CD4-positive, alpha-beta memory T cell (primary cell): ENCODE measurements at regions of chr17 and their contacts with region 1.

Region 1: DNA sequence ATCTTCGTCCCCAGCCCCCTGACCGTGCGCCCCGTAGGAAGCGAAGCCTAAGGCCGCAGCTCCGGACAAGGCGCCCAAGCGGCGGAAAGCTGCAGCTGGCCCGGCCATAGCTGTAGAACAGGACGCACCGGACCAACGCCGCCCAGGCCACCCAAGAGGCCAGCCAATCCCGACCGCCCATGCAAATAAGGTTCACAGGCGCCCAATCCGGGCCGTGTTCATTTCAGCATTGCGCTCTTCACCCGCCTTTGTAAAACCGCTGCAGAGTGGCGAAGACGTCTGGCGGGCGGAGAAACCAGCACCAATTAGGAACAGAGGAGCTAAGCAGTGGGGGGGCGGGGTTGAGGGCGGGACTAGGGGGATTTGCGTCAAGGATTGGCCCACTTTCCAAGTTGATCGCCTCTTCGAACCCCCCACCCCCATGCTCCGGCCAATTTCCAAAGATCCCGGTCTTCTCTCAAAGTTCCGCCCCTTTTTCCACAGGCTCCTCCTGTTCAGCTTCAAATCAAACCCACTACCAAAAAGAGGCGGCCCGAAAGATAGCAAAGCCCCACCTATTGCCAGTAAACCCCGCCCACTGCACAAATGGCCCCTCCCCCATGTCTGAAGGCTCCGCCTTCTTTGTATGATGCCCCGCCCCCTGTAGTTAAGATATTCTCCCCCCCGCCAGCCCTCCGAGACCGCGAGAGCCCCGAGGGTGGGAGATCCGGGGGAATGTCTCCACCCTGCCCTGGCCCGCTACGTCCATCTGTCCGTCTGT is at the start of gene TMEM256:
- DNase-seq: peak; percentile 91 to 98 (median 94)
- H3K4me3 ChIP-seq: peak within 1 kb of the TSS; percentile 73 to 77
- H3K4me3 Mint-ChIP-seq: peak within 1 kb of the TSS; percentile 93 to 98 (median 97)
- H3K27ac ChIP-seq: peak within 1 kb of the TSS; percentile 51
- H3K27ac Mint-ChIP-seq: peak within 1 kb of the TSS; percentile 89 to 99 (median 98)
- H3K4me1 ChIP-seq: peaks cover 17% of the 10 kb centered on the region
- H3K4me1 Mint-ChIP-seq: peaks cover 16 to 40% (median 18%) of the 10 kb centered on the region in 4 donors
- H3K27me3 ChIP-seq: no peaks in the 10 kb centered on the region
- H3K27me3 Mint-ChIP-seq: peaks cover 2% of the 10 kb centered on the region in 2 donors
- total RNA-seq, gene TMEM256: 35.4 to 38.3 TPM

Region 2: DNA sequence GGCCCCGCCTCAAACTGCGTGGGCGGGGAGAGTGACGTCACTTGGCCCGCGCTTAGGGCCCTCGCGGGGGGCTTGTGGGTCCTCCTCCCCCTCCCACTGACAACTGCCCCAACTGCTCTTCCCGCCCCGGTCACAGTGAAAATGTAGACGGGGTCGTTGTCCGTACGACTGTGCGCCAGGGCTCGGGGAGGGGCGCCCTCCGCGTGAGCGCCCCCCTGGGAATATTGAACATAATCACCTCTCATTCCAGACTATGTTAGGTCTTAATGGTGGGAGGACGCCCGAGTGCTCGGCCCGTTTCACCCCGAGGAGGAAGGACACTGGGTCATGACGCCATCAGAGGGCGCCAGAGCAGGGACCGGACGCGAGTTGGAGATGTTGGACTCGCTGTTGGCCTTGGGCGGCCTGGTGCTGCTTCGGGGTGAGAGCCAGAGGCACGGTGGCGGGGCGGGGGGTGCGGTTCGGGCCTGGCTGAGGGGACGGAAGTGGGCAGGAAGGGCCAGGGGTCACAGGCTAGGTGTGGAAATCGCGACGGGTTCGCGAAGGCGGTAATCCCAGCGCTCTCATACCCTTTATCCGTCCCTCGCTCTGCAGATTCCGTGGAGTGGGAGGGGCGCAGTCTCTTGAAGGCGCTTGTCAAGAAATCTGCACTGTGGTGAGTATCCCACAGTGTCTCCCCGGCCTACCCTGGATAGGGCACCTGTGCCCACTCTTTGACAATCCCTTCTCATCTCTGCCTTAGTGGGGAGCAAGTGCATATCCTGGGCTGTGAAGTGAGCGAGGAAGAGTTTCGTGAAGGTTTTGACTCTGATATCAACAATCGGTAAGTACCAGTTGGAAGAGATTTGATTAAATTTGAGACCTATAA is 151.7 kb before region 1 on chr17 and contains the start of gene ELP5:
- CTCF ChIA-PET with region 1: no interaction called
- POLR2A ChIA-PET with region 1: no interaction called
- intact Hi-C with region 1: loop called (anchors 1 kb)
- DNase-seq: peak in 4 of 5 donors; percentile 86 to 92 (median 88)
- H3K4me3 ChIP-seq: peak within 1 kb of the TSS; percentile 71 to 92
- H3K4me3 Mint-ChIP-seq: peak within 1 kb of the TSS; percentile 91 to 97 (median 95)
- H3K27ac ChIP-seq: peak within 1 kb of the TSS; percentile 98
- H3K27ac Mint-ChIP-seq: peak within 1 kb of the TSS; percentile 98 to 100 (median 99)
- H3K4me1 ChIP-seq: peaks cover 37% of the 10 kb centered on the region
- H3K4me1 Mint-ChIP-seq: peaks cover 25 to 49% (median 38%) of the 10 kb centered on the region in 4 donors
- H3K27me3 ChIP-seq: no peaks in the 10 kb centered on the region
- H3K27me3 Mint-ChIP-seq: no peaks in the 10 kb centered on the region
- total RNA-seq, gene ELP5: 29.8 to 30.9 TPM

Region 3: GRCh38 chr17:7329374-7329996 is 74.7 kb before region 1 on chr17:
- CTCF ChIA-PET with region 1: no interaction called
- POLR2A ChIA-PET with region 1: interaction called, 10 read pairs
- intact Hi-C with region 1: loop called (anchors 1 kb)
- DNase-seq: peak; percentile 97 to 99 (median 97)
- H3K4me3 ChIP-seq: peak overlapping the region; percentile 94 to 99
- H3K4me3 Mint-ChIP-seq: peak overlapping the region; percentile 97 to 98 (median 98)
- H3K27ac ChIP-seq: peak overlapping the region; percentile 82
- H3K27ac Mint-ChIP-seq: peak overlapping the region; percentile 93 to 99 (median 98)
- H3K4me1 ChIP-seq: peaks cover 49% of the 10 kb centered on the region
- H3K4me1 Mint-ChIP-seq: peaks cover 32 to 58% (median 42%) of the 10 kb centered on the region in 4 donors
- H3K27me3 ChIP-seq: no peaks in the 10 kb centered on the region
- H3K27me3 Mint-ChIP-seq: no peaks in the 10 kb centered on the region

Region 4: DNA sequence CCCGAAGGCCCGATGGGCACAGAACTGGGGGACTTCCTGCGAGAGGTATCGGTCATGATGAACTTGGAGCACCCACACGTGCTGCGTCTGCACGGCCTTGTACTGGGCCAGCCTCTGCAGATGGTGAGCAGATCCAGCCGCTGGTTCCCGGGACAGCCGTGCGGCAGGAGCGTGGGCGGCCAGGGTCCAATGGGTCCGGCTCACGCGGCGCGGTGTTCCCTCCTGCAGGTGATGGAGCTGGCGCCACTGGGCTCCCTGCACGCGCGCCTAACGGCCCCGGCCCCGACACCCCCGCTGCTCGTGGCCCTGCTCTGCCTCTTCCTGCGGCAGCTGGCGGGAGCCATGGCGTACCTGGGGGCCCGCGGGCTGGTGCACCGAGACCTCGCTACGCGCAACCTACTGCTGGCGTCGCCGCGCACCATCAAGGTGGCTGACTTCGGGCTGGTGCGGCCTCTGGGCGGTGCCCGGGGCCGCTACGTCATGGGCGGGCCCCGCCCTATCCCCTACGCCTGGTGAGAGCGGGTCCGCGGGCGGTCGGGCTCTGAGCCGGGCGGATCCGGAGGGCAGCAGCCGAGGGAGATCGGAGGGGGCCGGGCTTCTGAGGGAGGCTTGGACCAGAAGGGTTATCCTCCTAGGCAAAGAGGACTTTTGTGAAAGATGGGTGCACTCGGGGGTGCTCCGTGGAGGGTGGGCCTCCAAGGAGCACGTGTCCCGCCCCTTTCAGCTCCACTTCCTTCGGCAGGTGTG is 20.2 kb before region 1 on chr17:
- CTCF ChIA-PET with region 1: interaction called, 3 read pairs
- POLR2A ChIA-PET with region 1: interaction called, 69 read pairs
- intact Hi-C with region 1: loop called (anchors 1 kb)
- DNase-seq: peak; percentile 82 to 87 (median 84)
- H3K4me3 ChIP-seq: peak overlapping the region; percentile 42 to 86
- H3K4me3 Mint-ChIP-seq: peak overlapping the region; percentile 80 to 87 (median 82)
- H3K27ac ChIP-seq: peak overlapping the region; percentile 72
- H3K27ac Mint-ChIP-seq: peak overlapping the region; percentile 88 to 97 (median 94)
- H3K4me1 ChIP-seq: peaks cover 16% of the 10 kb centered on the region
- H3K4me1 Mint-ChIP-seq: peaks cover 8 to 28% (median 13%) of the 10 kb centered on the region in 4 donors
- H3K27me3 ChIP-seq: peaks cover 9% of the 10 kb centered on the region
- H3K27me3 Mint-ChIP-seq: peaks cover 28 to 32% of the 10 kb centered on the region in 2 donors

Region 5: GRCh38 chr17:7614422-7615264 is 210.5 kb after region 1 on chr17 and contains the start of gene FXR2:
- CTCF ChIA-PET with region 1: no interaction called
- POLR2A ChIA-PET with region 1: no interaction called
- intact Hi-C with region 1: loop called (anchors 1 kb)
- DNase-seq: peak; percentile 98 to 100 (median 99)
- H3K4me3 ChIP-seq: peak within 1 kb of the TSS; percentile 74 to 78
- H3K4me3 Mint-ChIP-seq: peak within 1 kb of the TSS; percentile 87 to 95 (median 93)
- H3K27ac ChIP-seq: peak within 1 kb of the TSS; percentile 66
- H3K27ac Mint-ChIP-seq: peak within 1 kb of the TSS; percentile 83 to 98 (median 97)
- H3K4me1 ChIP-seq: peaks cover 42% of the 10 kb centered on the region
- H3K4me1 Mint-ChIP-seq: peaks cover 22 to 49% (median 36%) of the 10 kb centered on the region in 4 donors
- H3K27me3 ChIP-seq: no peaks in the 10 kb centered on the region
- H3K27me3 Mint-ChIP-seq: no peaks in the 10 kb centered on the region
- total RNA-seq, gene FXR2: 44.1 to 46.6 TPM